Endothelial cell of umbilical vein (primary cell): ENCODE measurements at regions of chr14 and their contacts with region 1.

Region 1: DNA sequence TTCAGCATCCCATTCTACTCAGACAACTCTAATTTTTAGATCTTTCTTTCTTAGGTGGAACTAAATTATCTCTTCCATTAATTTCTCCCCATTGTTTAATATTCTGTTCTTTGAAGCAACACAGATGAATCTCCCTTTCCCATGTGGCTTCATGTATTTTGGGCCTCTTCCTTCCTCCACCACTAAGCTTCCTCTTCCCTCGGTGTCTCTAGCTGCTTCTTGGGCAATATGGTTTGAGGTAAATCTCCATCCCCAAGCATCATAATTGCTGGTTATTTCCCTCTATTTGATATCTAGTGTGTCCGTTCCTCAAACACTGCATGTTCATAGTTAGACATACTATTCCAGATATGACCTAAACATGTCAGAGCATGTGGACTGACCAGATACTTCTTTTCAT is 119.2 kb downstream of the PELI2 start:
- DNase-seq: no peak
- H3K4me3 ChIP-seq: no peak overlapping the region
- H3K27ac ChIP-seq: no peak overlapping the region
- H3K4me1 ChIP-seq: no peaks in the 10 kb centered on the region
- H3K27me3 ChIP-seq: no peaks in the 10 kb centered on the region
- CTCF ChIP-seq: no peak
- POLR2A ChIP-seq: no peak

Region 2: GRCh38 chr14:56219666-56220413 is 17.6 kb before region 1 on chr14:
- CTCF ChIA-PET with region 1: interaction called, 11 read pairs
- POLR2A ChIA-PET with region 1: no interaction called
- dilution Hi-C with region 1: no loop called
- intact Hi-C with region 1: no loop called
- DNase-seq: peak; percentile 30
- H3K4me3 ChIP-seq: no peak overlapping the region
- H3K27ac ChIP-seq: no peak overlapping the region
- H3K4me1 ChIP-seq: peaks cover 10% of the 10 kb centered on the region
- H3K27me3 ChIP-seq: no peaks in the 10 kb centered on the region
- CTCF ChIP-seq: no peak
- POLR2A ChIP-seq: no peak

Region 3: DNA sequence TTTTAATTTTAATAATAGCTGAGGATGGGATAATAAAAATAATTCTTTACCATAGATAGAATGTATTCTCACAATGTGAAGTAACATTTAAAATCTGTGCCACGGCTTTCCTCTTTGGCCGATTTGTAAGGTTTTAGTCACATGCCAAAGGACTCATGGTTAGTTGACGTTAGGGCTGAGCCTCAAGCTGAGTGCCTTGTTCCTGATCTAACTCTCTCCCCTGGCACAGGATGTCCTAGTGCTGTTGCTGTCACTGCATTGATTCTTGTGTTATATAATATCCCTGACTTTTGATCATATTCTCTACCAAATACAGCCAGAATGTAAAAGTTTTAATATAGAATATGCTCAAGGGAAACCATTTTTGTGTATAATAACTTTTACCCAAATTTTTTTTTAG is 25.1 kb after region 1 on chr14:
- CTCF ChIA-PET with region 1: no interaction called
- POLR2A ChIA-PET with region 1: no interaction called
- dilution Hi-C with region 1: no loop called
- intact Hi-C with region 1: no loop called
- DNase-seq: no peak
- H3K4me3 ChIP-seq: no peak overlapping the region
- H3K27ac ChIP-seq: no peak overlapping the region
- H3K4me1 ChIP-seq: no peaks in the 10 kb centered on the region
- H3K27me3 ChIP-seq: no peaks in the 10 kb centered on the region
- CTCF ChIP-seq: no peak
- POLR2A ChIP-seq: no peak